Mammary epithelial cell (primary cell): ENCODE measurements at regions of chr17 and their contacts with region 1.

Region 1: DNA sequence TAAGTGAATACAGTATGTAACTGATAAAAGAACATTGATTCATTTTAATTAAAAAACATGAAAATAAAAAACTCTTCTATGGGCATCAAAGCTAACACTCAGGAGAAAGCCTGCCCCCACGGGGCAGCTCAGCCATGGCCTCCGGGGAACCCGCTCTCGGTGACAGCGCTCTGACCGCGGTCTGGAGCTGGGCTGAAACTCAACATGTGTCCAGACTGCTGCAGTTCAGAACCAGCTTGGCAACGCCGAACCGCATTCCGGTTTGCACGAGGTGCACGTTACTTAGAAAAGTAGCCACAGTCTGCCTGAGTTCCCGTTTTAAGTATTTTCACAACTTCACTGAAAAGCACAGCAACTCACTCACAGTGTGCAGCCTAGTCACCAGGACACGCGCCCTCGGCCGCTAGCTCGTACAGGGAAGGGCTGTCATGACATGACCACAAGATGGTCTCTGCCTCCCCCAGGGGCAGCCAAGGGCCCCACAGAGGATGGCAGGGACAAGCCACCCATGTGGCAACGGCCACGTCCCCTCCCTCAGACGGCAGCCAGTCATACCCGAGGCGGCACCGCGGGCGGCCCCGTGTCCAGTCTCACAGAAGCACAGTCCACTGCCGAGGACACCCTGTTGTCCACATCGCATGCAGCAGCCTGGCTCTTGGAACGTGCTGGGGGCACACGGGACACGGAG is 77.1 kb upstream of the METRNL start:
- DNase-seq: no peak
- H3K4me3 ChIP-seq: no peak overlapping the region
- H3K27ac ChIP-seq: no peak overlapping the region
- H3K4me1 ChIP-seq: no peaks in the 10 kb centered on the region
- H3K27me3 ChIP-seq: no peaks in the 10 kb centered on the region
- CTCF ChIP-seq: no peak

Region 2: DNA sequence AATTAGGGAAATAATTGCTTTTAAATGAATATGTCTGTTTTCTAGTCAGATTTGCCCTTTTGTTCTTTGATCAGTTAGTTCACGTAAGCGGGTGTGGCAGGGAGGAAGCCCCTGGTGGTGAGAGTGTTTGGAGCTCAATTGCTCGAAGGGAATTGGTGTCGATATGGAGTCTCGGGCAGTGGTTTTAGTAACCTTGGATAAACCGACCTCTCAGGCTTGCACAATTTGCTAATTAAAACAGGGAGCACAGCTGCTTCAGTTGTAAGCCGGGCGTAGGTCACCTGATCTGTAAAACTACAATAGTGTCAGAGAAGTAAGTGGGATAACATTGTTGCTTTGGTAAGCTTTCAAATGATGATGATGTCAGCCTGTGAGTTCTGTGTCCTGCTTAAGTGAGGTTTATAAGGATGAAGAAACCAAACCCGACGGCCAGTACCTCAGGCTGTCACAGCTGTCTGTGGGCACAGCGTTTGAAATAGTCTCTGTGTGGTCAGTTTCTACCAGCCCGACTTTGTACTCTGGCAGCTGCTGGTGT is 165.4 kb before region 1 on chr17:
- CTCF ChIA-PET with region 1: no interaction called
- dilution Hi-C with region 1: no loop called
- in situ Hi-C with region 1: no loop called
- intact Hi-C with region 1: no loop called
- DNase-seq: no peak
- H3K4me3 ChIP-seq: no peak overlapping the region
- H3K27ac ChIP-seq: peak overlapping the region; percentile 100
- H3K4me1 ChIP-seq: peaks cover 38% of the 10 kb centered on the region
- H3K27me3 ChIP-seq: no peaks in the 10 kb centered on the region
- CTCF ChIP-seq: peak; percentile 2 to 14

Region 3: GRCh38 chr17:83041305-83041704 is 39.0 kb after region 1 on chr17:
- CTCF ChIA-PET with region 1: no interaction called
- dilution Hi-C with region 1: loop called (anchors 5 kb)
- in situ Hi-C with region 1: no loop called
- intact Hi-C with region 1: no loop called
- DNase-seq: no peak
- H3K4me3 ChIP-seq: no peak overlapping the region
- H3K27ac ChIP-seq: no peak overlapping the region
- H3K4me1 ChIP-seq: no peaks in the 10 kb centered on the region
- H3K27me3 ChIP-seq: no peaks in the 10 kb centered on the region
- CTCF ChIP-seq: no peak